ENCODE measurements at regions of chr12 and their contacts with region 1.

Region 1: DNA sequence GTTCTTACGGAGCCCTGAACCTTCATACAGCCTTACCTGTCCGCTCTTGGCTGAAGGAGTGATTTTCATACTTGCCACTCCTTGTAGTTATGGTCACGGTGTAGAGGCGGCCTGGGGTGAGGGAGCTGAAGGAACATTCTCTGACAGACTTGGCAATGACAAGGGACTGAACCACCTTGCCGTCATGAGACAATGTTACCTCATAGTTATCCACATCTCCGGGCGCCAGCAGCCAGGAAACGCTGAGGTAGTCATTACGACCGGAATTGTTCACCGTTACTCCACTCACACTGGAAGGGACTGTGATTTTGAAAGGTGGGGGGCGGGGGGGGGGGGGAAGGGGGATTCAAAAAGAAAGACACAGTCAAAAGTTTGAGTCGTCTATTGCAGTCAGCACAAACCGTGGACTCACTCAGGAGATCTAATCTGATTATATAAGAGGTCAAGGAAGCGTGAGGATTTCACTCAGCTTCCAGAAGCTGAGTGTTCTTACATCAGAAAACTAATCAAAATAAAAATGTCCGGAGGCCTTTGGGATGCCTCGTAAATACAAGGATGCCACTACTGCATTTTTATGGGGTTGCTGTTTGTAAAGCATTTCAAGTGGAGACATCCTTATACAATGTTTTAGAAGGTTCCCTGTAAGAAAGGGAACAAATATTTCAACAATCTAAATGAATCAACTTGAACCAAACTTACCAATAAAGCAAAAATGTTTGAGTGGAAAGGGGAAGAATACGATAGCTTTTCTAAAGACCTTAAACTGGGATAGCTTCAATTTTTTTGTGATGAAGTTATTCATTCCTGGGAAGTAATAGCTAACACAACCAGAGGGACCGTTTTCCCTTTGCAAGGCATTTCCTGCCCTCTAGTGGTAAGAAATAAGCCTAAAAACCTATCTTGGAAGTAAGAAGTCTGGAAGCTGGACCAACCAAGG is 60.6 kb downstream of the PTPRB start:
- DNase-seq: peak in 1 of 35 experiments; percentile 61
- ATAC-seq: no peak
- H3K4me3 ChIP-seq: no peak overlapping the region
- H3K4me3 Mint-ChIP-seq: no peak overlapping the region
- H3K27ac ChIP-seq: no peak overlapping the region
- H3K27ac Mint-ChIP-seq: no peak overlapping the region
- H3K4me1 ChIP-seq: no peaks in the 10 kb centered on the region
- H3K4me1 Mint-ChIP-seq: no peaks in the 10 kb centered on the region
- H3K27me3 ChIP-seq: no peaks in the 10 kb centered on the region
- H3K27me3 Mint-ChIP-seq: peaks cover 5 to 24% of the 10 kb centered on the region in 2 donors

Region 2: DNA sequence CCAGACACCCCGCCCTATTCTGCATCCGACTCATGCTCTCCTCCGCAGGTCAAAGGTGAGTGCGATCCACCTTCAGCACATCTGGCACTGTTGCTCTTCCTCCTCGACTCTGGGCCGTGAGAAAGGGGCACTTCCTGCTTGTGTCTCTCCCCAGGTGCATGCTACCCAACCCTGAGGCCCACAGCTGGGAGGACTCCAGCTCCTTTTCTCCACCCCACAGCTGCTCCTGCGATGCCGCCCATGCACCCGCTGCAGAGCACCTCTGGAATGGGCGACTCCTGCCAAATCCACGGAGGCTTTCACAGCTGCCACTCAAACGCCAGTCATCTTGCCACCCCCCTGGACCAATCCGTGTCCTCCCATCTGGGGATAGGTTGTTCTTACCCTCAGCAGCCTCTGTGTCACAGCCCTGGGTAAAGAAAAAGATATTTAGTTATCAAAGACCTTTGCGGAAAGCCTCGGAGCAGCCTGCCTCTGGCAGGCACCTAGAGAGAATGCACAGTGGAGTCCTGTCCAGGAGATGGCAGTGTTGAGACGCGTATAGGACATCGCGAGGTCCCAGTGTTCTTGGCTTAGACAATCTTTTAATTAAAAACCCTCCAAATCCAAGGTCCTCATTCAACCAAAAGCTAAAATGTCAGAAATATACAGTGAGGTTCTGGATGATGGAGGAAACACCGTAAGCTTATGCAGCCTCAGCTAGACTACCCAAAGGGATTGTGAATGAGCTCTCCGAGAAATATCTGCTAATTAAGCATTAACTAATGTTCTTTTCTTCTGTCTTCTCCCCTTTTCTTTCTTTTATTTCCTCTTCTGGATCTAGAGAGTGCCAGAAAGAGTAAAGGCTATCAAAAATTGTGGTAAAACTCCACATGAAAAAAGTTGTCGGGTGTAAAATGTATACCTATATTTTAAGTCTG is 697.3 kb before region 1 on chr12:
- CTCF ChIA-PET with region 1: interaction called, 9 to 25 read pairs
- POLR2A ChIA-PET with region 1: no interaction called
- DNase-seq: peak; percentile 5 to 78 (median 48)
- ATAC-seq: peak; percentile 74 to 81 (median 77)
- H3K4me3 ChIP-seq: no peak overlapping the region
- H3K4me3 Mint-ChIP-seq: peak overlapping the region in 1 of 3 donors; percentile 31
- H3K27ac ChIP-seq: no peak overlapping the region
- H3K27ac Mint-ChIP-seq: no peak overlapping the region
- H3K4me1 ChIP-seq: peaks cover 0 to 5% of the 10 kb centered on the region in 2 experiments
- H3K4me1 Mint-ChIP-seq: peaks cover 4 to 6% (median 5%) of the 10 kb centered on the region in 3 donors
- H3K27me3 ChIP-seq: peaks cover 0 to 11% of the 10 kb centered on the region in 2 experiments
- H3K27me3 Mint-ChIP-seq: peaks cover 6 to 20% of the 10 kb centered on the region in 2 donors

Region 3: DNA sequence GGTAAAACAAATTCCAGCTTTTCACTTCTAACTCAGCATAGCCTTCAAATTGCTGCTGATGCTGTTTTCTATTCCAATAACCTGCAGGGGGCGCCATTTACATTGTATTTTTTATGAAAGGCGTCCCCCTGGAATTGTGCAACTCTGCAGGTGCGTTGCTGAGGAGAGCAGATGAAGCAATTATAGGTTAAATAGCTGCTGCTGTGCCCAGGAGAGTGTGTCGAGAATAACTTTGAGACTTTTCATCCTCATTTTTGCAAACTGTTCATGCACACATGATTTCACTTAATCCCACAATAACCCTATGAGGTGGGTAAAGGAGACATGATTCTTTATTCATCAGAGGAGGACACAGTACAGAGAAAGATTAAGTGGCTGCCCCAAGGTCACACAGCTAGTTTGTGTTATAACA is 675.9 kb before region 1 on chr12:
- CTCF ChIA-PET with region 1: interaction called, 21 to 36 read pairs
- POLR2A ChIA-PET with region 1: no interaction called
- DNase-seq: peak in 32 of 35 experiments; percentile 16 to 72 (median 47)
- ATAC-seq: no peak
- H3K4me3 ChIP-seq: no peak overlapping the region
- H3K4me3 Mint-ChIP-seq: no peak overlapping the region
- H3K27ac ChIP-seq: no peak overlapping the region
- H3K27ac Mint-ChIP-seq: no peak overlapping the region
- H3K4me1 ChIP-seq: no peaks in the 10 kb centered on the region
- H3K4me1 Mint-ChIP-seq: no peaks in the 10 kb centered on the region
- H3K27me3 ChIP-seq: no peaks in the 10 kb centered on the region
- H3K27me3 Mint-ChIP-seq: peaks cover 2 to 7% of the 10 kb centered on the region in 2 donors

Region 4: GRCh38 chr12:70078161-70078560 is 498.5 kb before region 1 on chr12:
- CTCF ChIA-PET with region 1: interaction called in 1 of 2 experiments, 11 read pairs
- POLR2A ChIA-PET with region 1: no interaction called
- DNase-seq: no peak
- ATAC-seq: no peak
- H3K4me3 ChIP-seq: no peak overlapping the region
- H3K4me3 Mint-ChIP-seq: no peak overlapping the region
- H3K27ac ChIP-seq: no peak overlapping the region
- H3K27ac Mint-ChIP-seq: no peak overlapping the region
- H3K4me1 ChIP-seq: no peaks in the 10 kb centered on the region
- H3K4me1 Mint-ChIP-seq: peaks cover 0 to 3% (median 0%) of the 10 kb centered on the region in 3 donors
- H3K27me3 ChIP-seq: no peaks in the 10 kb centered on the region
- H3K27me3 Mint-ChIP-seq: no peaks in the 10 kb centered on the region

Region 5: DNA sequence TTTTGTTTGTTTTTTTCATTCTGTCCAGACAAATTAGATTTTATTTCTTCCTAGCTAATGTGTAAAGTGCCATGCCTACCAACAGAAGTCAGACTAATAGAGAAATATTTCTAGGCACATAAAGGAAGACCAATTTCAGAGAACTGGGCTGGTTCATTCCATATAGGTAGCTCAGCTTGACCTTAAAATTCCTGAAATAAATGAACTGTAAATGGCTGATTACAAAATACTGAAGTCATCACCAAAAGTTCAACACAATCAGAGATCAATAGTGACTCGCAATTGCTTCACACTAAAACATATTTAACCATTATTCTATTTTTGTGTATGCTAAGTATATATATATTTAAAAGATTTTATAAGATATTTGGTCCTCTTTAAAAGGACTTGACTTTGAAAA is 26.4 kb after region 1 on chr12:
- CTCF ChIA-PET with region 1: no interaction called
- POLR2A ChIA-PET with region 1: no interaction called
- DNase-seq: no peak
- ATAC-seq: no peak
- H3K4me3 ChIP-seq: no peak overlapping the region
- H3K4me3 Mint-ChIP-seq: no peak overlapping the region
- H3K27ac ChIP-seq: no peak overlapping the region
- H3K27ac Mint-ChIP-seq: no peak overlapping the region
- H3K4me1 ChIP-seq: no peaks in the 10 kb centered on the region
- H3K4me1 Mint-ChIP-seq: no peaks in the 10 kb centered on the region
- H3K27me3 ChIP-seq: no peaks in the 10 kb centered on the region
- H3K27me3 Mint-ChIP-seq: peaks cover 13 to 15% of the 10 kb centered on the region in 2 donors

Region 6: DNA sequence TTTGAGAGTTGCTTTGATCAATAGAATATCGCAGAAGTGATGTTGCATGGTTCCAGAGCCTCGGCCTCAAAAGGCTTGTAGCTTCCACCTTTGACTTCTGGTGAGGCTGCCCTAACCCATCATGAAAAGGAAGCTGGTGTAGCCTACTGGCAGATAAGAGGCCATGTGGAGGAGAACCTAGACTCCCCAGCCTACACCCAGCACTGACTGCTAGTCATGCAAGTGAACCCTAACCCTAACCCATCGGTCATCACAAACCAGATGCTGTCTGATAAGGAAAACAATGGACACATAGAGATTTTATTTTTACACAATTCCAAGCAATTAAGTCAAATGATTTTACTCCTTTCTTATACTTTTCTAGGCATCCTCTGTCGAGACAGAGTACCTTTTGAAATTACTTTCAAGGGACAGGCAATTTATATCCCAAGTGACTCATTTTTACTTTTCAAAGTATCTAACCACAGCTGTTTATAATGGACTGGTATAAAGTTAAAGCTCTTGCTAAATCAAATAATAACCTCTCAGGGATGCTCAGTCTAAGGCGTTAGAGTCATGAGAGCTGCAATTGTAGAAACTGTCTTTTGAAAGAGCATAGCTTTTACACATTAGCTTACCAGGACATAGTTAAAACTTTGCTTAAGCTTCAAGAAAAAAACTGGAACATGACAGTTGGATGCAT is 43.0 kb after region 1 on chr12:
- CTCF ChIA-PET with region 1: interaction called in 1 of 2 experiments, 3 read pairs
- POLR2A ChIA-PET with region 1: interaction called in 1 of 2 experiments, 12 read pairs
- DNase-seq: no peak
- ATAC-seq: no peak
- H3K4me3 ChIP-seq: no peak overlapping the region
- H3K4me3 Mint-ChIP-seq: no peak overlapping the region
- H3K27ac ChIP-seq: no peak overlapping the region
- H3K27ac Mint-ChIP-seq: no peak overlapping the region
- H3K4me1 ChIP-seq: no peaks in the 10 kb centered on the region
- H3K4me1 Mint-ChIP-seq: no peaks in the 10 kb centered on the region
- H3K27me3 ChIP-seq: peaks cover 0 to 2% of the 10 kb centered on the region in 2 experiments
- H3K27me3 Mint-ChIP-seq: peaks cover 5 to 16% of the 10 kb centered on the region in 2 donors

Measured in T-cell (primary cell).